Heart right ventricle (tissue), 16 donors: ENCODE measurements at regions of chr1 and their contacts with region 1.

Region 1: DNA sequence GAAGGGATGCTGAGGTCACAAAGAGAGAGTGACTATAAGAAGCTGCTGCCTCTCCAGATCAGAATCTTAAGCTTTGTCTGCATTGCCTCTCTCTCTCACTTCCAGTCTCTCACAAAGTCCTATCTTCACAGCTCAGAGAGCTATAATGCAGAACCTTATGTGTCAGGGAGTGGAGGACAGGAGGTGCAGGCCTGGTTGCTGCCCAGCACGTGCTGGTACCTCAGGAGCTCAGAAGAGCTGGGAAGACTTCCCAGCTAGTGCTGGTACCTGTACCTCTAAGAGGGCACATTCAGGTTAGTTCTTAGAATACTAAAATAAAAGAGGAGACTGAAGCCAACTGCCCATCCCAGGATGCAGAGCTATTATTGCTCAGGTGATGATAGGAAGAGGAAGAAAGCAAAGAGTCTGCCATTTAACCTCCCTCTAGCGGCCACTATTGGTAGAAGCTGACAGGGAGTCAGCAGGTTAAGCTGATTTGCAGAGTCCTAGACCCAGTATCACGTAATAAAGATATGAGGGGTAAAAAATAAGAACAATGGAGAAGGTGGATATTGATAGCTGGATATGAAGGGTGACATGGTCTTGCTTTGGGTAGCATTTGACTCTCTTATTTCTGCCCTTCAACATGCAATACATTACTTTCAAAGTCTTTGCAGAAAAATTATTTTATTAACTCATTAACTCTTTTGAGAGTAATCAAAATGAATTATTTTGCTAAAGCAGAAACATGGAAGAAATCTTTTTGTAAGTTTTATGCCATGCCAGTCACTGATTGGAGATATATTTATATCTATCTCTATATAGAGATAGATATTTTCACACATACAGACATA is 138.1 kb upstream of the HMCN1 start:
- DNase-seq: peak in 1 of 2 donors; percentile 29
- ATAC-seq: peak in 5 of 8 donors; percentile 18 to 42 (median 39)
- H3K4me3 ChIP-seq: no peak overlapping the region
- H3K27ac ChIP-seq: peak overlapping the region in 7 of 10 donors; percentile 41 to 81 (median 70)
- H3K4me1 ChIP-seq: peaks cover 0 to 41% (median 29%) of the 10 kb centered on the region in 9 donors
- H3K27me3 ChIP-seq: no peaks in the 10 kb centered on the region
- CTCF ChIP-seq: peak in 8 of 9 donors; percentile 25 to 63 (median 50)

Region 2: GRCh38 chr1:185244015-185244747 is 351.9 kb before region 1 on chr1:
- intact Hi-C with region 1: loop called in 1 of 10 experiments (anchors 10 kb)
- DNase-seq: no peak
- ATAC-seq: no peak
- H3K4me3 ChIP-seq: no peak overlapping the region
- H3K27ac ChIP-seq: no peak overlapping the region
- H3K4me1 ChIP-seq: peaks cover 0 to 13% (median 0%) of the 10 kb centered on the region in 9 donors
- H3K27me3 ChIP-seq: no peaks in the 10 kb centered on the region
- CTCF ChIP-seq: no peak

Region 3: GRCh38 chr1:185317034-185317885 is 278.8 kb before region 1 on chr1 and contains the start of gene IVNS1ABP:
- intact Hi-C with region 1: loop called in 4 of 10 experiments (anchors 2 to 10 kb)
- DNase-seq: peak; percentile 95
- ATAC-seq: peak; percentile 88 to 95 (median 91)
- H3K4me3 ChIP-seq: peak within 1 kb of the TSS; percentile 85 to 99 (median 92)
- H3K27ac ChIP-seq: peak within 1 kb of the TSS; percentile 90 to 99 (median 96)
- H3K4me1 ChIP-seq: peaks cover 3 to 49% (median 44%) of the 10 kb centered on the region in 9 donors
- H3K27me3 ChIP-seq: no peaks in the 10 kb centered on the region
- CTCF ChIP-seq: peak in 5 of 9 donors; percentile 10 to 43 (median 25)
- total RNA-seq, gene IVNS1ABP: 44.7 to 132 (median 66.7) TPM

Region 4: DNA sequence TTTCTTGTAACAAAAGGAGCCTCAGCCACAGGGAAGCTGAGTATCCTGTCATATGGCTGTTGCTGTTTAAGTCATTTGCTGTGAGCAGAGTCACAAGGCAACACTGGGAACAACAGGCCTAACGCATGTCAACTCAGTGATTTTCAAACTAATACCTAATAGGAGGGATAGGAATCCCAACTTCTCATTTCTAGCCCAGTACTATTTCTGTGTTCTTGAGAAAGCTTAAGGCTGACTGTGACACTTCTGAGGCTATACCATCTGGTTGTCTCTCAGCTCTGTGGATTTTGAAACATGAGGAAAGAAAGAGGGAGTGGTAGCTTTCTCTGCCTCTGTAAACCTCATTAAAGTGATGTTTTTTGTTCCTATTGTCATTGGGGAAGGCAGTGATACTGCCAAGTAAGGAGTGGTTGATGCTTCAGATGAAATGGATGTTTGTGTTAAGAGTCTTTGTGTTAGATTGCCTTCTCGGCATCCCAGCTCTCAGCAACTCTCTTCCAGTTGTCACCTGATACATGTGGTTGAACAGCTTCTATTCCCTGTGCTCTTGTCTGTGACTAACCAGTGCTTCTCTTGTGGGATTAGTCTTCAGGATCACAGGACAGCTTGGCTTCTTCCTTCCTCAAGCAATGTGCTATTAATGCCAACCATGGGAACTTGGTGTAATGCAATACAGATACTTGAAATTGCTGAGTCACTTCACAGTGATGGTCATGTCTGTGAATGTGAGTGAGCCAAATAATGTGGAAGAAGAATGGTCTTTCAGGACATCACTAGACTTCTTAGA is 112.2 kb before region 1 on chr1:
- intact Hi-C with region 1: loop called in 1 of 10 experiments (anchors 10 kb)
- DNase-seq: no peak
- ATAC-seq: peak in 7 of 8 donors; percentile 12 to 88 (median 66)
- H3K4me3 ChIP-seq: no peak overlapping the region
- H3K27ac ChIP-seq: peak overlapping the region in 8 of 10 donors; percentile 2 to 83 (median 53)
- H3K4me1 ChIP-seq: peaks cover 3 to 41% (median 17%) of the 10 kb centered on the region in 9 donors
- H3K27me3 ChIP-seq: no peaks in the 10 kb centered on the region
- CTCF ChIP-seq: no peak

Region 5: GRCh38 chr1:185520188-185520935 is 75.7 kb before region 1 on chr1:
- intact Hi-C with region 1: no loop called
- DNase-seq: no peak
- ATAC-seq: no peak
- H3K4me3 ChIP-seq: no peak overlapping the region
- H3K27ac ChIP-seq: no peak overlapping the region
- H3K4me1 ChIP-seq: peaks cover 0 to 7% (median 0%) of the 10 kb centered on the region in 9 donors
- H3K27me3 ChIP-seq: no peaks in the 10 kb centered on the region
- CTCF ChIP-seq: no peak

Region 6: GRCh38 chr1:185652348-185652747 is 56.3 kb after region 1 on chr1:
- intact Hi-C with region 1: loop called in 2 of 10 experiments (anchors 5 kb)
- DNase-seq: no peak
- ATAC-seq: no peak
- H3K4me3 ChIP-seq: no peak overlapping the region
- H3K27ac ChIP-seq: peak overlapping the region in 2 of 10 donors; percentile 11 to 83
- H3K4me1 ChIP-seq: peaks cover 0 to 15% (median 2%) of the 10 kb centered on the region in 9 donors
- H3K27me3 ChIP-seq: no peaks in the 10 kb centered on the region
- CTCF ChIP-seq: peak in 3 of 9 donors; percentile 22 to 27 (median 23)

Region 7: DNA sequence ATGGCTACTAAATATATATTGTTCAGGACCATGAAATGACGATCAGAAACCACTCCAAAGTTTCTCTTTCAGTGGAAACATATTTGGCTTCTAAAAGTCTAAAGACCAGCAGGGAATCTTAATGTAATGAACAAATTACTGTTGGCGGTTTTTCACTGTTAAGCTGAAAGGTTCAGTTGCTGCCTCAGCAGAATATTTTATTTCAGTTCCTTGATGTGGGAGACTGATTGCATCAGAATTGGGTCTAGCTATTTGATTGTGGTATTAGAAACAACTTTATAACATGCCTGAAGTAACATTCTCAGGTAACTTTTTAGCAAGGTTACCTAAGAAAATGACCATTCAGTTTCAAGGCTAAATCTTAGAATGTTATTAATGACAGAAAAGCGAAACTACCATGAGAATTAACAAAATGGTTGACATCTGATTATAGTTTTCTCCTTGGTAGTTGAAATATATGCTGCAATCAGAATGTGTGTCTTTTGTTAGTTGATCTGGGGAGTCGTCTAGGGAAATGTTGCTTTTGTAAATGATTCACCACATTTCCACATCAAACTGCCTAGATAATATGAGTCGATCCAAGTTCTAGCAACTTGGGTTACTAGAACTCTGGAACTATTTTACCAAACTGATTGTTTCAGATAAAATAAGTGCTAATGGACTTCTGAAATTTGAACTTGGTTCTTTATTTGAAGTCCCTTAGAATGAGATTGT is 338.6 kb after region 1 on chr1:
- intact Hi-C with region 1: no loop called
- DNase-seq: no peak
- ATAC-seq: no peak
- H3K4me3 ChIP-seq: no peak overlapping the region
- H3K27ac ChIP-seq: no peak overlapping the region
- H3K4me1 ChIP-seq: peaks cover 0 to 18% (median 0%) of the 10 kb centered on the region in 9 donors
- H3K27me3 ChIP-seq: no peaks in the 10 kb centered on the region
- CTCF ChIP-seq: no peak